Panc1 (cell line): ENCODE measurements at regions of chr10 and their contacts with region 1.

Region 1: GRCh38 chr10:35251373-35252100 is 84.8 kb upstream of the CCNY start:
- DNase-seq: no peak
- ATAC-seq: no peak
- H3K4me3 ChIP-seq: no peak overlapping the region
- H3K27ac ChIP-seq: no peak overlapping the region
- H3K4me1 ChIP-seq: no peaks in the 10 kb centered on the region
- H3K27me3 ChIP-seq: no peaks in the 10 kb centered on the region
- CTCF ChIP-seq: no peak

Region 2: DNA sequence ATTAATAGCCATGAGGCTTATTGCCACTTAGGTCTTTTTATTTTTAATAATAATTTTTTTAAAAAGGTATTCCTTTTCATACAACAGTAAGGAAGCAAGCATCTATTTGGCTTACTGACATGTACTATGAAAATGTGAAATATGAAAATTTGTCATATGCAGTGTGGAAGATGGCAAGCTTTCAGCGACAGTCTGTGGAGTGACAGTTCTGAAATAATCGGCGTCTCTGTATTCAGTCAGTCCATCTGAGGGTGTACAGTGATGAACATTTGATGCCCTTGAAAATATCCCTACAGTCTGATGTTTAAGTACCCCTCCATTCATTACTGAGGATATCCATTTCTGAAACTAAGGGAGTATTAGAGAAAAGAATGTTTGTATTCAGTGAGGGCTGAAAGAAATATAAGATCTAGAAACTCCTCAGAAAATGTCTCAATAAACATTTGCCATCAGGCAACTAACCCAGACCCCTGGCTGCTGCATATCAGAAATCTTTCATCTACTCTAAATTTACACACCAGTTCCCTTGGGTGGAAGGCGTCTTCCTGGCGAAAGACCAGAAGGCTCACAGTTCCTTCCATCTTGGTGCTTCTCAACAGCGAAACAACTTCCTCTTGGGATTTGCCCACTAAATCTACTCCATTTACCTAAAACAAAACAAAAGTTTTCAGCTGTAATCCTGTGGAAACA is 877.0 kb before region 1 on chr10:
- CTCF ChIA-PET with region 1: no interaction called
- POLR2A ChIA-PET with region 1: no interaction called
- in situ Hi-C with region 1: no loop called
- intact Hi-C with region 1: no loop called
- DNase-seq: no peak
- ATAC-seq: no peak
- H3K4me3 ChIP-seq: no peak overlapping the region
- H3K27ac ChIP-seq: no peak overlapping the region
- H3K4me1 ChIP-seq: no peaks in the 10 kb centered on the region
- H3K27me3 ChIP-seq: no peaks in the 10 kb centered on the region
- CTCF ChIP-seq: no peak

Region 3: GRCh38 chr10:35271086-35271858 is 19.7 kb after region 1 on chr10:
- CTCF ChIA-PET with region 1: no interaction called
- POLR2A ChIA-PET with region 1: interaction called, 10 read pairs
- in situ Hi-C with region 1: no loop called
- intact Hi-C with region 1: no loop called
- DNase-seq: no peak
- ATAC-seq: no peak
- H3K4me3 ChIP-seq: no peak overlapping the region
- H3K27ac ChIP-seq: no peak overlapping the region
- H3K4me1 ChIP-seq: no peaks in the 10 kb centered on the region
- H3K27me3 ChIP-seq: no peaks in the 10 kb centered on the region
- CTCF ChIP-seq: no peak

Region 4: DNA sequence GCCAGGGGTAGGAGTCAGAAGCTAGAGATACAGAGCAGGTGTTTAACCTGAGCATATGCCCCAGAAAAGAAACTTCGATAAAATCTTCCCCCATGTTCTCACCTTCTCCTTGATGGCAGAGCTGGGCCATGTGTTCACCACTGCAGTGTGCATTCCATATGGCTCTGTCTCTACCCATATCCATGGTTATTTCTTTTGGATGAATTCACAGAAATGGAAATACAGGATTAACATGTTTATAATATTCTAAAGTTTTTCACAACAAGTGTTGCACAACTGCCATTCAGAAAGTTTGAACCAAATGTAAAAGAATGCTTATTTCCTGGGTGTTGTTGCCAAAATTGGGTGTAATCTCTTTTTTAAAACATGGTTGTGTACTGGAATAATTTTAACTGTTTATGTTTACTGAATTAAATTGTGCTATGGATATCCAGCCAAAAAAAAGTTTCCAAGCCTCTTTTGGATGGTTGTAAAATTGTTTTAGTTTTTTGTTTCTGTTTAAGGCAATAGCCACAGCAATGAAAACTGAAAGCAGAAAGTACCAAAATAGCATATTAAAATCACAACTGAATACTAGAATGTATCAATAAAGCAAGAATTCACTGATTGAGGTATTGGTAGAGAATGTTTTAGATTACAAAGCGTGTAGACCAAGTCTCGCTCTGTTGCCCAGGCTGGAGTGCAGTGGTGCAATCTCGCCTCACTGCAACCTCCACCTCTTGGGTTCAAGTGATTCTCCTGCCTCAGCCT is 64.9 kb after region 1 on chr10:
- CTCF ChIA-PET with region 1: no interaction called
- POLR2A ChIA-PET with region 1: no interaction called
- in situ Hi-C with region 1: no loop called
- intact Hi-C with region 1: no loop called
- DNase-seq: no peak
- ATAC-seq: no peak
- H3K4me3 ChIP-seq: no peak overlapping the region
- H3K27ac ChIP-seq: no peak overlapping the region
- H3K4me1 ChIP-seq: no peaks in the 10 kb centered on the region
- H3K27me3 ChIP-seq: no peaks in the 10 kb centered on the region
- CTCF ChIP-seq: no peak

Region 5: GRCh38 chr10:35336084-35336831 is 84.7 kb after region 1 on chr10 and contains the start of gene CCNY:
- CTCF ChIA-PET with region 1: no interaction called
- POLR2A ChIA-PET with region 1: no interaction called
- in situ Hi-C with region 1: no loop called
- intact Hi-C with region 1: loop called (anchors 10 kb)
- DNase-seq: no peak
- ATAC-seq: peak; percentile 94
- H3K4me3 ChIP-seq: peak within 1 kb of the TSS; percentile 83 to 88
- H3K27ac ChIP-seq: peak within 1 kb of the TSS; percentile 62
- H3K4me1 ChIP-seq: peaks cover 35% of the 10 kb centered on the region
- H3K27me3 ChIP-seq: no peaks in the 10 kb centered on the region
- CTCF ChIP-seq: no peak
- total RNA-seq, gene CCNY: 51.9 TPM

Region 6: DNA sequence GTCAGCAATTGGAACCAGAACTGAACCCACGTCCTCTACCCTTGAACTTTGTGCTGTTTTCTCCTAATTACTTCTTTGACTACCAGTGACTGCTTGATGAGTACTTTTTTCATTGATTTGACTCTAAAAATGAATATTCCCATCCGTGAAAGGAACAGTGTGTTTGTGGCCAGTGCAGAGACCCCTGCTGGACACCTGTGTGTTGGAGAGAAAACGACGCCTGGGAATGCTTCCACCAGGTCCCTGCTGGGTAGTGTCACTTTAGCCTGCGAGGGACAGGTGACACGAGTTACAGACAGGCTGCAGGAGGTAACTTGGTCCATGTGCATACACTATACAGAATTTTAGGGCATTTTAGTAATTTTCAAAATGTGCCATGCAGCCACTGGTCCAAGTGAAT is 346.8 kb after region 1 on chr10:
- CTCF ChIA-PET with region 1: no interaction called
- POLR2A ChIA-PET with region 1: no interaction called
- in situ Hi-C with region 1: no loop called
- intact Hi-C with region 1: loop called (anchors 10 kb)
- DNase-seq: no peak
- ATAC-seq: no peak
- H3K4me3 ChIP-seq: no peak overlapping the region
- H3K27ac ChIP-seq: no peak overlapping the region
- H3K4me1 ChIP-seq: no peaks in the 10 kb centered on the region
- H3K27me3 ChIP-seq: no peaks in the 10 kb centered on the region
- CTCF ChIP-seq: peak; percentile 65